ENCODE measurements at regions of chr10 and their contacts with region 1.

Region 1: GRCh38 chr10:13891128-13892000 is 304.6 kb downstream of the PRPF18 start:
- DNase-seq: peak; percentile 57 to 81
- ATAC-seq: peak; percentile 64
- H3K4me3 ChIP-seq: peak overlapping the region; percentile 81 to 88
- H3K27ac ChIP-seq: peak overlapping the region in 1 of 2 donors; percentile 76
- H3K4me1 ChIP-seq: peaks cover 2 to 4% of the 10 kb centered on the region in 2 donors
- H3K27me3 ChIP-seq: no peaks in the 10 kb centered on the region

Region 2: GRCh38 chr10:13839430-13839990 is 51.9 kb before region 1 on chr10:
- intact Hi-C with region 1: loop called in 1 of 2 experiments (anchors 5 kb)
- DNase-seq: peak; percentile 72 to 85
- ATAC-seq: peak; percentile 67
- H3K4me3 ChIP-seq: no peak overlapping the region
- H3K27ac ChIP-seq: peak overlapping the region in 1 of 2 donors; percentile 77
- H3K4me1 ChIP-seq: peaks cover 3 to 4% of the 10 kb centered on the region in 2 donors
- H3K27me3 ChIP-seq: no peaks in the 10 kb centered on the region

Measured in aorta (tissue), 5 donors.